ENCODE measurements at regions of chr9 and their contacts with region 1.

Region 1: DNA sequence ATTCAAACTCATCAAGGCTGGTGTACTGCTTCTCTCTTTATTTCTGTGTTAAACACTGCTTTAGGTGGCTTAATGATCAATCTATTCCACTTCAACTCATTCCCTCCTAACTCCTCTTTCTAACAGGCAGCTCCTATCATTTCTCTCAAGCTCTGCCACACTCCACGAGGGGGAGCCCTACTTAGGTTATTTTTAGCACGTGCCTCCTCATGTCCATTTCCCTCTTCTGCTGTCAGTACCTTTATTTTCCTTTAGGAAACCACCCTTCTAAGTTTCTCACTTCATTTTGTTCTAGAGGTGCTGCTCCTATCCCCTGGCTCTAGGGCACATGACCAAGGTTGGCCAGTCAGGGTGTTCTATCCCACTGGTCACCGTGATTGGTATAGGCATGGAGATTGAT is 6.7 kb upstream of the BRINP1 start:
- DNase-seq: peak; percentile 60
- H3K4me3 ChIP-seq: no peak overlapping the region
- H3K27ac ChIP-seq: no peak overlapping the region
- H3K4me1 ChIP-seq: no peaks in the 10 kb centered on the region
- H3K27me3 ChIP-seq: peaks cover 9% of the 10 kb centered on the region
- CTCF ChIP-seq: peak; percentile 54

Region 2: GRCh38 chr9:119298076-119298853 is 77.6 kb before region 1 on chr9:
- CTCF ChIA-PET with region 1: no interaction called
- POLR2A ChIA-PET with region 1: no interaction called
- intact Hi-C with region 1: no loop called
- DNase-seq: no peak
- H3K4me3 ChIP-seq: no peak overlapping the region
- H3K27ac ChIP-seq: no peak overlapping the region
- H3K4me1 ChIP-seq: no peaks in the 10 kb centered on the region
- H3K27me3 ChIP-seq: no peaks in the 10 kb centered on the region
- CTCF ChIP-seq: no peak

Region 3: GRCh38 chr9:120099065-120099464 is 723.2 kb after region 1 on chr9:
- CTCF ChIA-PET with region 1: no interaction called
- POLR2A ChIA-PET with region 1: no interaction called
- intact Hi-C with region 1: no loop called
- DNase-seq: peak; percentile 1
- H3K4me3 ChIP-seq: no peak overlapping the region
- H3K27ac ChIP-seq: no peak overlapping the region
- H3K4me1 ChIP-seq: no peaks in the 10 kb centered on the region
- H3K27me3 ChIP-seq: peaks cover 14% of the 10 kb centered on the region
- CTCF ChIP-seq: no peak

Region 4: DNA sequence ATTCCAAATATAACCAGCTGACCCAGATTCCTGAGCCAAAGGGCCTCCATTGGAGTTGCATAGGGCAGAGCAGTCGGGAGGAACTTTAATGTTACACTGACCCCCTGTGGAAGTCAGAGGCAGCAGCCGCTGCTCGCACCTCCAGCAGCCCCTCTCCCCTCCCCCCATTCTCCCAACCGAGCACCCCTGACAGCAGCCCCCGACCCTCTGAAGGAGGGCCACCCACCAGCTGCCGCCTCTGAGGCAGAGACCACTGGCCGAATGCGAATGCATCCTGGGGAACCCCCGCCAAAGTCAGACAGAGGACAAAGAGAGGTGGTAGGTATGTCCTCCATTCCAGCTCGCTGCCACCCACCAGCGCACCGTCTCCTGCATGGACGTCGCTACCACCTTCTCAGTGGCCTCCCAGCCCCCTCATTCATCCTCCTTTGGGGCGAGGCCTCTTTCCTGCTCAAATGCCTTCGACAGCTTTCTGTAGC is 973.1 kb after region 1 on chr9:
- CTCF ChIA-PET with region 1: no interaction called
- POLR2A ChIA-PET with region 1: no interaction called
- intact Hi-C with region 1: loop called (anchors 5 kb)
- DNase-seq: peak; percentile 55
- H3K4me3 ChIP-seq: no peak overlapping the region
- H3K27ac ChIP-seq: no peak overlapping the region
- H3K4me1 ChIP-seq: no peaks in the 10 kb centered on the region
- H3K27me3 ChIP-seq: no peaks in the 10 kb centered on the region
- CTCF ChIP-seq: peak; percentile 78